Posterior vena cava (tissue), 2 donors: ENCODE measurements at regions of chr10 and their contacts with region 1.

Region 1: GRCh38 chr10:26417136-26417535 is 21.0 kb upstream of the APBB1IP start:
- DNase-seq: no peak

Region 2: DNA sequence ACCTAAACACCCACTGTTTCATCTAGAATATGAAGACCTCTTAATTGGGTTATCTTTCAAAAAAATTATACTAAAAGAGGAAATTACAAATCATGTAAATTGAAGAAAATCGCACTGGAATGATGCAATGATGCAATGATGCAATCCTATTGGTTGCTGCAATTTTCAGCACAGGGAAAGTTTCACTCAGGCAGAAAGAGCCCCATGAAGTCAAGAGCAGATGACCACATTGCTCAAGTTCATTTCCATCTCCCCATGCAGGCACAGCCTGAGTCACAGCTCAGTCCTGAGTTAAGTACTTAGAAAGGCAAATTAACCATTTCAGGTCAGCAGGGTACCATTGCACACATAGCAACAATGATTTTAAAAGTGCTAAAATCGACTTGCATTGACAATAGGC is 663.4 kb before region 1 on chr10:
- intact Hi-C with region 1: loop called in 1 of 2 experiments (anchors 5 kb)
- DNase-seq: no peak